Right ventricle myocardium superior (tissue), 1 donor: ENCODE measurements at regions of chr2 and their contacts with region 1.

Region 1: DNA sequence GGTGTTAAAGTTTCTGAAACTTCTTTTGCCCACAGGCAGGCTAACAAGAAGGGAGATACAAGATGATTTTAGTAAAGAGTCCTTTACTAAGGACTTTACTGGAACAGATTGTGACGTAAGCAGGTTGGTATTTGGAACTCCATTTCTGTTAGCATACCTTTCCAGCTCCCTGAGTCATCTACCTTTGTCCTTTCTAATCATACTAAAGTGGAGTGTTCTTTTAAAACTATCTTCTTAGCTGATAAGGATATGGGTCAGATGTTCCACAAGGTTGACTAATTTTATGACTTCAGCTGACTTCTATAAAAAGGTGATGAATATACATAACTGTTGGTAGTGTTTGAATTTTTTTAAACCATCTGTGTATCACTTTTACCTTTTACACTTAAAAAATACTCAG is 21.1 kb downstream of the UGP2 start:
- DNase-seq: no peak
- ATAC-seq: peak; percentile 12

Region 2: DNA sequence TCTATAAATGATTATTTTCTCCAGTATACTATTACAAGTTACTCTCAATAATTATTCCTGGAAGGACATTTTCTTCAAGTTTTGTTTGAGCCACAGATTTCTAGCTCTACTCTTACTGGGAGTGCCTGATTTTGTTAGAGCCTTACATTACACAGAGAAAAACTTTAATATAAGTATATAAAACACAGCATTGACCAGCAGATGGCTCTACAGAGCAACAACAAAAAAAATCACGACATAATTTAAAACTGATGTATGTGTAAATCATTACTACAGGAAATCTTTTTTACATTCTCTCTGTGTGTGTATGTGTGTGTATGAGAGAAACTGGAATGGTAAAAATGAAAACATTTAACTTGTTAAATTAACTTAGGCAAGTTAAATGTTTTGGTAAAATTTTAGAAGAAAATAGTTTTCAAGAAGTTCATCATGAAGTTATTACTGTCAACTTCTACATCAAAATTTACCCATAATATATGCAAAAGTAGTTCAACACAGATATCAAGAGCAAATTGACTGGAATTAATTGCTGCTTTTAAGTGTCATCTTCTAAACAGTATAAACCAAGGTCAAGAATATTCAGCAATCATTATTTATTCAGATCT is 170.7 kb before region 1 on chr2:
- intact Hi-C with region 1: loop called (anchors 2 kb)
- DNase-seq: no peak
- ATAC-seq: peak; percentile 56

Region 3: GRCh38 chr2:63891488-63892030 is 28.8 kb after region 1 on chr2:
- intact Hi-C with region 1: no loop called
- DNase-seq: no peak
- ATAC-seq: no peak

Region 4: DNA sequence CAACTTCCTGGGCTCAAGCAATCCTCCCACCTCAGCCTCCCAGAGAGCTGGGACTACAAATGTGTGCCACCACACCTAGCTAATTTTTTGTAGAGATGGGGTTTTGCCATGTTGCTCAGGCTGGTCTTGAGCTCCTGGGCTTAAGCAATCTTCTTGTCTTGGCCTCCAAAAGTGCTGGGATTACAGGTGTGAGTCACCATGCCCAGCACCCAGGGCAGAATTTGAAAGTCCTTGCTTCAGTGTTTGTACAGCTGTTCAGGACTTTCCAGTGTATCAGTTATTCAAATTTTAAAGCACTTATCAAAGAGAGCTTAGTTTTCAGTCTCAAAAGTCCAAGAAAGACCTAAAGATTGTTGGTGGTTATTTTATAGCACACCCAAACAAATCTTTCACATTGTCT is 200.0 kb after region 1 on chr2:
- intact Hi-C with region 1: no loop called
- DNase-seq: no peak
- ATAC-seq: no peak